ENCODE measurements at regions of chr4 and their contacts with region 1.

Region 1: GRCh38 chr4:73653695-73654106 is 33.5 kb upstream of the RASSF6 start:
- DNase-seq: peak in 2 of 10 donors; percentile 27 to 73

Region 2: DNA sequence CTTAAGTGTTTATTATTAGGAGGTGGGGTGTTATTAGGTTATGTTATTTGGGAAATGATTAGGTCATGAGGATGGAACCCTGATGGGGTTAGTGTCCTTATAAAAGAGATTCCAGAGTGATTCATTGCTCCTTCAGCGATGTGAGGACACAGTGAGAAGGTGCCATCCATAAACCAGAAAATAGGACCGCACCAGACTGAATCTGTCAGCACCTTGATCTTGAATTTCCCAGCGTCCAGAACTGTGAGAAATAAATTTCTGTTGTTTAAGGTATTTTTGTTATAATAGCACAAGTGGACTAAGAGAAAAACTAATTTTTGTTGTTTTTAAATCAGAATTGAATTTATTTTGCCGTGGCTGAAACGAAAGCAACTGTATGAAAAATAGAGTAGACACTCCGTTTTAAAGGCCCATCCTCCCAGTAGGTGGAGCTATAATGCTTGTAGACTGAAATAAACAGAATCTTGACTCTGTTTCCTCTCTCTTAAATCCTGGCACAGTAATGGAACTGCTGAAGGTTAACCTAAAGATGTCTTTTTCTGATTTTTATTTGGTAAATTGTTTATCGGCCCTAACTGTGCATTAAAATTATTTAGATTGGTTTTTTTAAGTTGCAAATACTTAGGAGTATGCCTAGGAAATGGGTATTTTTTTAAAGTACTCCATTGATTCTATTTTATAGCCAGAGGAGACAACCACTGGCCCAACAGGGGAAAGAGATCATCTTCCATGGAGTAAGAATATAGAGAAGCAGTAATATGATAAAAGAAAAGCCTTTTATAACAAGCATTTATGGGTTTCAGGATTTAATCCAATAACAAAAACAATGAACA is 951.5 kb before region 1 on chr4:
- intact Hi-C with region 1: loop called (anchors 5 kb)
- DNase-seq: peak in 1 of 10 donors; percentile 11

Region 3: DNA sequence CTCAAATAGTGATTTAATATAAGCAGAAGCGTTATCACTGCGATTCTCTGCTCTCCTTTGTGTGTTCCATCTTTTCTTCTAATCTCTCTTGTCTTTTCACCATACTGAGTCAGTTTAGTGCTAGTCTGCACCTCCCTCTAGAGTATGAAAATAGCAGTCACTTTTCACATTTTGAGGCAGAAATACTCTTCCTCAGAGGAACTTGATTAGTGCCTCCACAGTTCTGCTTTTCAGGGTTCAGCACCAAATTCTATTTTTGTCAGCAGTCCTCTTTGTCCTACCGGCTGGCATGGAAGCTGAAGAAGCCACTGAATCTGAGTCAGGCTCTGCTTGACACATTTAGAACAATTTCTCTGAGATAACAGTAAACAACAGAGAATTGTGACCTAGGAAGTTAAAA is 345.4 kb before region 1 on chr4:
- intact Hi-C with region 1: loop called (anchors 5 kb)
- DNase-seq: peak in 2 of 10 donors; percentile 14 to 75

Region 4: GRCh38 chr4:73341454-73341853 is 312.2 kb before region 1 on chr4:
- intact Hi-C with region 1: loop called (anchors 2 kb)
- DNase-seq: peak in 4 of 10 donors; percentile 37 to 65 (median 56)

Region 5: DNA sequence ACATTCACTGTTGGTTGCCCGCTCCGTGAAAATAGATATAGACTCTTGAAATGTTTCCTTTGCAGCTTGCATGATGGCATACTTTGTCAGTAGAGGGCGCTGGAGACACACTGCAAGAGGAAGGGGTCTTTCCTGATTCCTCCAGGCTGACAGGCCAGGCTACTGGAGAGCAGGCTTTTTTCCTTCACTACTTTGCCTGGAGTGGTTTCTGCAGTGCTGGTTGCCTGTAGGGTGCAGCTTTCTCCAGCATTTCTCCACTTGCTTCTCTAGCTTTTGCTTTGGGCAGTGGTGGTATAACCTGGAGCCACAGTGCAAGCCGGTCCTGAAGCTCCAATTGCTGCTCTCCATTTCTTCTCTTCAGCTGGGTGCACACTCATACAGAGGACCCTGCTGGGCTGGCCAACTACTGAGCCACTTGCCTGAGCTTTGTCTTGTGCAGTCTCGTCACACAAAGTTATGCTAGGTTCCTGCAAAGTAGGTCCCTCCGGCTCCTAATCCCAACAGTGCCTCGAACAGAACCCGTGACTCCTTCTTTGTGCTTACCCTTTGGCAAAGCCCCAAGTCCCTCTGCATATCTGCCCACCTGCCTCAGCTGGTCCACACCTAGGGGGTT is 79.8 kb before region 1 on chr4:
- intact Hi-C with region 1: loop called (anchors 2 kb)
- DNase-seq: peak in 7 of 10 donors; percentile 7 to 62 (median 49)

Region 6: GRCh38 chr4:73998040-73999011 is 344.6 kb after region 1 on chr4 and contains the start of gene CXCL5:
- intact Hi-C with region 1: no loop called
- DNase-seq: peak; percentile 19 to 90 (median 32)